ENCODE measurements at regions of chr7 and their contacts with region 1.

Region 1: GRCh38 chr7:151110941-151111645 is 24.8 kb downstream of the AGAP3 start:
- DNase-seq: peak; percentile 88 to 93 (median 92)
- ATAC-seq: peak; percentile 91
- H3K4me3 ChIP-seq: no peak overlapping the region
- H3K27ac ChIP-seq: no peak overlapping the region; the same call in 2 of the 3 replicates
- H3K4me1 ChIP-seq: peaks cover 51 to 73% of the 10 kb centered on the region in 2 experiments
- H3K27me3 ChIP-seq: no peaks in the 10 kb centered on the region
- CTCF ChIP-seq: peak; percentile 94 to 95 (median 95)
- EP300 ChIP-seq: no peak
- POLR2A ChIP-seq: no peak
- RAD21 ChIP-seq: peak; percentile 94

Region 2: DNA sequence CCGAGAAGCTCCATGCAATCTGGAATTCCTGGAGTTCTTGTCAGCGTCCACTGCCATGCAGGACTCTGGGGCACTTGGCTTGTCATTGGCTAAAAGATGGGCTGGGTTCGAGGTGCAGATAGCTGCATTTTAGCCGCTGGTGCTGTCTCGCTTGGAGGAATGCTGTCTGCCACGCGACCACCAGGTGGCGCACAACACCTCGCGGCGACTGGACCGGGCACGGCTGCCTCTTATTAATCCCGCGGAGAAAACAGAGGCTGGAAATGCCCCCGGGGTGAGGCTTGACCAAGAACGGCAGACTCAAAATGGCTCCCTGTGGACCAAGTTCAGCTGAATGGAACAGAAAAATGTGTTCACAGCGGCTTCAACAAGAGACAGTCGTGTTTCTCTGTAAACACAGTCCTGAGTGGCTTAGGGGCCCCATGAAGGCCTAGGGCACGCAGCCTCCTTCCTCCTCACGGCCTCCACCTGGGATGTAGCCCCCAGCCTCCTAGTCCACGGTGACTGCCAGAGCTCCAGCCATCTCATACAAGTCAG is 212.6 kb before region 1 on chr7:
- CTCF ChIA-PET with region 1: interaction called, 14 read pairs
- POLR2A ChIA-PET with region 1: interaction called, 3 read pairs
- in situ Hi-C with region 1: no loop called
- intact Hi-C with region 1: loop called (anchors 5 kb)
- DNase-seq: peak; percentile 88 to 93 (median 92)
- ATAC-seq: peak; percentile 94
- H3K4me3 ChIP-seq: no peak overlapping the region
- H3K27ac ChIP-seq: no peak overlapping the region; the same call in 2 of the 3 replicates
- H3K4me1 ChIP-seq: peaks cover 17 to 36% of the 10 kb centered on the region in 2 experiments; a peak in 4 of 5 replicates
- H3K27me3 ChIP-seq: peaks cover 17 to 27% of the 10 kb centered on the region in 2 experiments; a peak in 4 of 5 replicates
- CTCF ChIP-seq: peak; percentile 97 to 100 (median 98)
- EP300 ChIP-seq: peak; percentile 17; the same call in 1 of the 2 replicates
- POLR2A ChIP-seq: no peak
- RAD21 ChIP-seq: peak; percentile 99

Region 3: GRCh38 chr7:150962553-150963399 is 148.3 kb before region 1 on chr7:
- CTCF ChIA-PET with region 1: interaction called, 15 read pairs
- POLR2A ChIA-PET with region 1: no interaction called
- in situ Hi-C with region 1: no loop called
- intact Hi-C with region 1: loop called (anchors 5 kb)
- DNase-seq: peak; percentile 81 to 92 (median 86)
- ATAC-seq: peak; percentile 79
- H3K4me3 ChIP-seq: no peak overlapping the region
- H3K27ac ChIP-seq: peak overlapping the region; percentile 99
- H3K4me1 ChIP-seq: peaks cover 77 to 80% of the 10 kb centered on the region in 2 experiments
- H3K27me3 ChIP-seq: no peaks in the 10 kb centered on the region
- CTCF ChIP-seq: peak; percentile 98 to 99 (median 98)
- EP300 ChIP-seq: 0 out of 2 replicates have a peak, but pooled peaks have one; percentile 4
- POLR2A ChIP-seq: no peak
- RAD21 ChIP-seq: peak; percentile 98

Region 4: DNA sequence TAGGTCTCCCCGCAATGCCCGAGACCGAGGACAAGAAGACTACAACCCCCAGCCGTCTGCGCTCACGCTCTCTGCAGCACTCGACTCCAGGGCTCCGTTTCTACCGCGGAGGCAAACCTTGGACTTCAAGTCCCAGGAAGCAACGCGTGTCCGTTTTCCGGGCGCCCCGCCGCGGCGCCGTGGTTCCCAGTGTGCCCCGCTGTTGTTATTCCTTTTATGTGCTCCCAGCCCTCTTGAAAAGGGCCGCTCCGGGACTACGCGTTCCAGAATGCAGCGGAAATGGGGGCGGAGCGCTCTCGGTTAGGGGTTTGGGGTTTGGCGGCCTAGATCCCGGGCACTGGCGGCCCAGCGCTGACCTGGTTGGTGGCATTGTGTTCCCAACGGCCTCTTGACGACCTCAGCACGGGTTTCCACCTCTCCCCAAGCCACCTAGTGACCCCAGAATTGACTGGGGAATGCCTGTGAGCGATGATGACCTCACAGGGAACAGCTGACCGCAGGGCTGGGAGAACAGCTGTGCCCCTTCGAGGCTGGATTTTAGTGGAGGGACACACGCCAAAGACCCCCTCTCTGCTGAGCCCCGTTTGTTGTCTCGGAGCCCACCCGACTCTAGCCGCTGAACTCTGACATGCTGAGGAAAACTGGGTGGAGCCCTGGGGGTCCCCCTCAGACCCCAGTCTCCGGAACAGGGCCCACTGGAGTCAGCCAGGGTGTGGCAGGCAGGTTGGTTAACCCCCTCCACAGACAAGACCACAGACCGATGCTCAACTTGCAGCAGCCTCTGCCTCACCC is 52.9 kb before region 1 on chr7:
- CTCF ChIA-PET with region 1: interaction called, 6 read pairs
- POLR2A ChIA-PET with region 1: no interaction called
- in situ Hi-C with region 1: no loop called
- intact Hi-C with region 1: loop called (anchors 2 kb)
- DNase-seq: peak; percentile 96 to 100 (median 98)
- ATAC-seq: peak; percentile 86
- H3K4me3 ChIP-seq: peak overlapping the region; percentile 84
- H3K27ac ChIP-seq: peak overlapping the region; percentile 90
- H3K4me1 ChIP-seq: peaks cover 59 to 75% of the 10 kb centered on the region in 2 experiments
- H3K27me3 ChIP-seq: no peaks in the 10 kb centered on the region
- CTCF ChIP-seq: no peak
- EP300 ChIP-seq: peak; percentile 19; the same call in 1 of the 2 replicates
- POLR2A ChIP-seq: peak; percentile 79
- RAD21 ChIP-seq: 0 out of 4 replicates have a peak, but pooled peaks of 1 of the 2 experiments have one; percentile 7

Region 5: GRCh38 chr7:151091431-151091830 is 19.7 kb before region 1 on chr7:
- CTCF ChIA-PET with region 1: interaction called, 7 read pairs
- POLR2A ChIA-PET with region 1: interaction called, 31 read pairs
- in situ Hi-C with region 1: no loop called
- intact Hi-C with region 1: loop called (anchors 2 kb)
- DNase-seq: peak; percentile 74 to 89 (median 78)
- ATAC-seq: peak; percentile 71
- H3K4me3 ChIP-seq: no peak overlapping the region
- H3K27ac ChIP-seq: no peak overlapping the region
- H3K4me1 ChIP-seq: peaks cover 21 to 54% of the 10 kb centered on the region in 2 experiments
- H3K27me3 ChIP-seq: no peaks in the 10 kb centered on the region
- CTCF ChIP-seq: peak; percentile 86 to 96 (median 88)
- EP300 ChIP-seq: no peak
- POLR2A ChIP-seq: no peak
- RAD21 ChIP-seq: peak; percentile 23 to 57; a peak in 2 of 4 replicates

Measured in K562 (cell line).